GM13976 (cell line): ENCODE measurements at regions of chr15 and their contacts with region 1.

Region 1: DNA sequence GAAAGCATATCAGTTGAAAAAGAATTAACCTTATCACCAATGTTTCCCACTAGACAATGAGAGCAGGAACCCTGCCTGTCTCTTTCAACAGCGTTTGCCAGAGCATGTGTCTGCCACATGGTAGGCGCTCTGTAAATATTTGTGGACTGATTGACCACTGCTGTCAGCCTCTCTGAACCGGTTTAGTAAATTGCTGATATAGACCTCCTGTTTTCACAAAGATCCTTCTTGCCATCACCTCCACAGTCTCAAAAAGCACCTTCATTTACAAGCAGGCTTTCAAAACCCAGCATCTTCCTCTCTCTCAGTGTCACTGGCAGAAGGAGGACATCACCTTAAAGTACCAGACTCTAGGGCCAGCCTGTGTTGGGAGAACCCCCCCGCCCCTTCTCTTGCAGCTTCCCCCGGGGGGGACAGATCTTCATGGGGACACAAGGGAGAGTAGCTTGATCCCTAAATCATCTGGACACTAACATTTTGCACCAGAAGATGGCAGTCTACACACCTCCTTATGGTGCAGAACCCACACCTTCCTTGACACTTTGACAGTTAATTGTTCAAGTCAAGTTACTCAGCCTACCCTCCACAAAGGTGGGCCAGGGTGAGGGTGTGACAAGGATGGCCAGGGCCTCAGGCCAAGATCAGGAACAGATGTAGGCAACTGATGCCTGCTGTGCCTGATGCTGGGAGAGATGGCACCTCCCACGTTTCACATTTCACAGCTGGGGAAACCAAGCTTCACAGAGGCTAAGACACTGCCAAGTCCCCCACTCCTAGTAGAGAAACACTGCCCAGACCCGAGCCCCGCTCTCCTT is 37.8 kb upstream of the USP3 start:
- DNase-seq: peak; percentile 83
- CTCF ChIP-seq: peak; percentile 61

Region 2: DNA sequence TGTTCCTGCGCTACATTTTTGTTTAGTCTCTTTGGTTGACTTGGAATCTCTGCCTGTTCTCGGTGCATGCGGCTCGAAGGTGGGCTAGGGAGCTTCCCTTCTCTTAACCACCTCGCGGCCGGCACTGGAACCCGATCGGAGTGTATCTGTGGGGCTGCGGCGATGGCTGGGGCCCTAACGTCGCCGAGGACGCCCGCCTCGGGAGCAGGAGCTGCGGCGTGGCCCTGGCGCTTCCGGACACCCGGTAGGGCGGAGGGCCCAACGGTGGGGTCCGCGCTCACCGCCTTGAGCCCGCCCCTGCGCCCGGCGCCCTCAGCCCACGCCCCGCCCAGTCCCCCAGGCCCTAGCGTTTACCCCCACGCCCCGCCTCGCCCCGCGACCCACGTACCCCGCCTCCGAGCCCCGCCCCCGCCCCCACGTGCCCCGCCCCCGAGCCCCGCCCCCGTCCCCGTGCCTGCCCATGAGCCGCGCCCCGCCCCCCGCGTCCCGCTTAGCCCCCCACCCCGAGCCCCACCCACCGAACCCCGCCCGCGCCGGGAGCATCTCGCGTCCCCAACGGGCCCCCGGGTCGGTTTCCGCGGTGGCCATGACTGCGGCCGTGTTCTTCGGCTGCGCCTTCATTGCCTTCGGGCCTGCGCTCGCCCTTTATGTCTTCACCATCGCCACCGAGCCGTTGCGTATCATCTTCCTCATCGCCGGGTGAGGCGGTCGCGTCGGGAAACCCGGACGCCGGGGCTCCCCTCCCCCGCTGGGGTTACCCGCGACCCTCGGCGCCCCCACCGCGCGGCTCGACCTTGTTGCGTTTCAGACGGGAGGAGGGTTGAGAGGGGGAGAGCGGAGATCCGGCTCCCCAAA is 189.3 kb before region 1 on chr15 and contains the start of gene APH1B:
- in situ Hi-C with region 1: no loop called
- DNase-seq: peak; percentile 88
- CTCF ChIP-seq: no peak

Region 3: DNA sequence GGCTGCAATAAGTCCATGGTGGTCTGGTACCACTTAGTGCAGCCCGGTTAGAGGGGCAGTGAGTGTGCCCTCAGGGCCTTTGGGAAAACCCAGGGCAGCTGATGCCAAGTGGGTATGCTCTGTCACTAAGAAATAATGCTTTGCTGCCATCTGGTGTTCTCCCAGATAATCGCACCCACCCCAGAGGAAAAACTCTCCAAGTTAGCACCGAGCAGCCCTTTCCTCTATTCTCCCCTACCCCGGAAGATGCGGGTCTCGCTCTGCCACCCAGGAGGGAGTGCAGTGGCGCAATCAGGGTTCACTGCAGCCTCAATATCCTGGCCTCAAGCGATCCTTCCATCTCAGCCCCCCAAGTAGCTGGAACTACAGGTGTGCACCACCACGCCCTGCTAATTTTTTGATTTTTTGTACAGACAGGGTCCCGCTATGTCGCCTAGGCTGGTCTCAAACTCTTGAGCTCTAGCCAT is 601.0 kb after region 1 on chr15:
- in situ Hi-C with region 1: loop called (anchors 25 kb)
- DNase-seq: peak; percentile 72
- CTCF ChIP-seq: peak; percentile 72